Endothelial cell of umbilical vein (primary cell): ENCODE measurements at regions of chr6 and their contacts with region 1.

Region 1: GRCh38 chr6:126339796-126340609 is at the start of gene CENPW:
- DNase-seq: peak; percentile 92
- H3K4me3 ChIP-seq: peak within 1 kb of the TSS; percentile 62 to 99 (median 98)
- H3K27ac ChIP-seq: peak within 1 kb of the TSS; percentile 61
- H3K4me1 ChIP-seq: peaks cover 15% of the 10 kb centered on the region
- H3K27me3 ChIP-seq: peaks cover 0 to 2% of the 10 kb centered on the region in 2 experiments
- CTCF ChIP-seq: no peak
- POLR2A ChIP-seq: peak; percentile 56
- total RNA-seq, gene CENPW: 82.7 and 85.8 TPM in 2 replicates

Region 2: GRCh38 chr6:126033696-126034095 is 306.3 kb before region 1 on chr6:
- CTCF ChIA-PET with region 1: no interaction called
- POLR2A ChIA-PET with region 1: no interaction called
- dilution Hi-C with region 1: no loop called
- intact Hi-C with region 1: loop called (anchors 5 kb)
- DNase-seq: peak; percentile 78
- H3K4me3 ChIP-seq: no peak overlapping the region
- H3K27ac ChIP-seq: no peak overlapping the region
- H3K4me1 ChIP-seq: no peaks in the 10 kb centered on the region
- H3K27me3 ChIP-seq: no peaks in the 10 kb centered on the region
- CTCF ChIP-seq: peak; percentile 56 to 65
- POLR2A ChIP-seq: no peak

Region 3: GRCh38 chr6:126252154-126252553 is 87.8 kb before region 1 on chr6:
- CTCF ChIA-PET with region 1: no interaction called
- POLR2A ChIA-PET with region 1: no interaction called
- dilution Hi-C with region 1: no loop called
- intact Hi-C with region 1: no loop called
- DNase-seq: no peak
- H3K4me3 ChIP-seq: no peak overlapping the region
- H3K27ac ChIP-seq: no peak overlapping the region
- H3K4me1 ChIP-seq: peaks cover 3% of the 10 kb centered on the region
- H3K27me3 ChIP-seq: no peaks in the 10 kb centered on the region
- CTCF ChIP-seq: no peak
- POLR2A ChIP-seq: no peak

Region 4: DNA sequence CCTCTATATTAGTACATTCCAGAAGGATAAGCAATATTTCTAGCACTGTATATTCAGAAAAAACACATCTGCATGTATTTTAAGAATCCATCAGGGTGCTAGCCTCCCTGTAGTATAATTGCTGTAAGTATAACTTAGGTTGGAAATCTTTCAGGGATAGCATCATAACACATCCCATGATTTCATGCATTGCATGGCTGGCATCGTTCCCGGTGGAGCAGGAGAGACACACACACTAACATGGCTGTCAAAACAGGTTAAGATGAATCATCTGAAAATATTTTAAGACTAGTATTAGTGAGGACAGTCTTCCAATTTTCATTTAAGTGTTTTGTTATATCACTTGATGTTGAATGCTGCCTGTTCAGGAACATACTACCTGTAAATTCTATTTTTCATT is 32.2 kb before region 1 on chr6:
- CTCF ChIA-PET with region 1: no interaction called
- POLR2A ChIA-PET with region 1: no interaction called
- dilution Hi-C with region 1: no loop called
- intact Hi-C with region 1: no loop called
- DNase-seq: peak; percentile 32
- H3K4me3 ChIP-seq: no peak overlapping the region
- H3K27ac ChIP-seq: no peak overlapping the region
- H3K4me1 ChIP-seq: no peaks in the 10 kb centered on the region
- H3K27me3 ChIP-seq: no peaks in the 10 kb centered on the region
- CTCF ChIP-seq: no peak
- POLR2A ChIP-seq: no peak

Region 5: DNA sequence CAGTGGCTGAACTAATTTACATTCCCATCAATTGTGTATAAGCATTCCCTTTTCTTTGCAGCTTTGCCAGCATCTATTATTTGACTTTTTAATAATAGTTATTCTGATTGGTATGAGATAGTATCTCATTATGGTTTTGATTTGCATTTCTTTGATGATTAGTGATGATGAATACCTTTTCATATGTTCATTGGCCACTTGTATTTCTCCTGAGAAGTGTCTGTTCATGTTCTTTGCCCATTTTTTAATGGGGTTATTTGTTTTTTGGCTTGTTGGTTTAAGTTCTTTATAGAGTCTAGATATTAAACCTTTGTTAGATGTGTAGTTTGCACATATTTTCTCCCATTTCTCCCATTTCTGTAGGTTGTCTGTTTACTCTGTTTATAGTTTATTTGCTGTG is 16.5 kb after region 1 on chr6:
- CTCF ChIA-PET with region 1: interaction called, 5 read pairs
- POLR2A ChIA-PET with region 1: no interaction called
- dilution Hi-C with region 1: no loop called
- intact Hi-C with region 1: loop called (anchors 2 kb)
- DNase-seq: no peak
- H3K4me3 ChIP-seq: no peak overlapping the region
- H3K27ac ChIP-seq: no peak overlapping the region
- H3K4me1 ChIP-seq: peaks cover 18% of the 10 kb centered on the region
- H3K27me3 ChIP-seq: no peaks in the 10 kb centered on the region
- CTCF ChIP-seq: no peak
- POLR2A ChIP-seq: no peak